ENCODE measurements at regions of chr1 and their contacts with region 1.

Region 1: GRCh38 chr1:32247983-32248889 is 1.2 kb downstream of the FAM167B start:
- DNase-seq: peak; percentile 94
- ATAC-seq: peak; percentile 75

Region 2: GRCh38 chr1:32291708-32292492 is 43.7 kb after region 1 on chr1 and contains the start of gene HDAC1:
- intact Hi-C with region 1: loop called (anchors 10 kb)
- DNase-seq: peak; percentile 99
- ATAC-seq: peak; percentile 99
- total RNA-seq, gene HDAC1: 41.0 TPM

Measured in Right ventricle myocardium superior (tissue), 1 donor.